ENCODE measurements at regions of chr2 and their contacts with region 1.

Region 1: DNA sequence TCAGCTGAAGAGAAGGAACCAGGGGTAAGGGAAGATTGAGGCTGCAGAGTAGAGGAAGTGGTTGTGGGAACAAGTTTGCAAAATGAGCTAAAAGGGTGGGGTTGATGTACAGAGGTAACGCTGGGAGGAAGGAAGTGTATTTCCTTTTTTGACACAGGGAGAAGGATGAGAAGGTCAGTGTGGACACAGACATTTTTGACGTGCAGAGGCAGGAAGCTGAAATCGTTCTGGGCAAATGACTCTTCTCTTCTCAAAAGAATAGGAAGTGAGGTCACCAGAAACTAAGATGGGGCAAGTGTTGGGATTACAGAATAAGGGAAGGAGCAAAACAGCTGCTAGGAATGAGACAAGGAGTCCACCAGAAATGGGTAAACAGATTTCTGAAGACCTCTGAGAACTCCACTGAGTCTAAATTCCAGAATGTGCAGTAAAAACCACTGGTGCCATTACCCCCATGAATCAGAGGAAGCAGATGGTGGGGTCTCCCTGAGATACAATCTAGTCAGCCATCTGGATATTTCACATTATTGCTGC is 20.0 kb upstream of the RNF149 start:
- DNase-seq: peak; percentile 88
- ATAC-seq: peak; percentile 85
- H3K4me3 ChIP-seq: peak overlapping the region; percentile 61
- H3K27ac ChIP-seq: peak overlapping the region; percentile 97
- H3K4me1 ChIP-seq: peaks cover 39% of the 10 kb centered on the region
- H3K27me3 ChIP-seq: no peaks in the 10 kb centered on the region
- CTCF ChIP-seq: no peak

Region 2: DNA sequence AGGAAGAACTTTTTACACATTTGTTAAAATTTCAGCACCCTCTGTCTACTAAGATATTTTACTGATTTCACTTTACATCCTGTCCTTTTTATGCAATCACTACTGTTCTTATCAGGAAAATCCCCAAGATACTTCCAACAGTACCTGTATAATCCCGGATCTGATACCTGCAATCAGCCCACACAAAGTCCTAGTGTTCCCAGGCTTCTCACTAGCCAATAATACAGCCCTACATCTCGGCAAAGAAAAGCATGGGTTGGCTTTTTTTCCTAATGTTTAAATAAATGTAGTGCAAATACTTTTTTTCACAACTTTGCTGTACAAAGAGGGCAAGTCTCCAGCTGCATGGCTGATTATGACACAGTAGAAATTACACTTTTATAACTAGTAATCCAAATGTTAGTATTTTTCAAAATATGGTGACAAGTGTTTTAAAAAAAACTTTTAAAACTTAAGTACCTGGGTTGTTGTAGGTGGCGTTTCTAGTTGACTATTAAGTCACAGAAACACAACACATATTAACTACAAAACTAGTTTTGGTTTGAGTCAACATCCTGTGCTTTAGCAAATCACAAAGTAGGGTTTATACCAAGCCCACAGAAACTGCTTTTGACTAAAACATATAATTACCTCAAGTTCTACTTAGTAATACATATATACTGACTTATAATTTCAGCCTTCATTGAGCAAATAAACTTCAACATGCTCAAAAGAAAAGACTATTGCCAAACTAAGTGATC is 56.3 kb before region 1 on chr2:
- CTCF ChIA-PET with region 1: no interaction called
- POLR2A ChIA-PET with region 1: no interaction called
- intact Hi-C with region 1: loop called (anchors 5 kb)
- DNase-seq: no peak
- ATAC-seq: no peak
- H3K4me3 ChIP-seq: no peak overlapping the region
- H3K27ac ChIP-seq: no peak overlapping the region
- H3K4me1 ChIP-seq: peaks cover 3% of the 10 kb centered on the region; the same call in 1 of the 2 replicates
- H3K27me3 ChIP-seq: no peaks in the 10 kb centered on the region
- CTCF ChIP-seq: no peak

Region 3: GRCh38 chr2:101380376-101380775 is 51.8 kb after region 1 on chr2:
- CTCF ChIA-PET with region 1: no interaction called
- POLR2A ChIA-PET with region 1: no interaction called
- intact Hi-C with region 1: no loop called
- DNase-seq: peak; percentile 17
- ATAC-seq: peak; percentile 56; the same call in 1 of the 2 replicates
- H3K4me3 ChIP-seq: no peak overlapping the region
- H3K27ac ChIP-seq: no peak overlapping the region
- H3K4me1 ChIP-seq: peaks cover 1% of the 10 kb centered on the region; the same call in 1 of the 2 replicates
- H3K27me3 ChIP-seq: no peaks in the 10 kb centered on the region
- CTCF ChIP-seq: no peak

Measured in PC-3 (cell line).